Activated CD8-positive, alpha-beta memory T cell treated with anti-CD3 and anti-CD28 coated beads, Interleukin-2, amount 10 ng/mL, durations not matched to agents 7 days and 5 days (primary cell): ENCODE measurements at regions of chr16 and their contacts with region 1.

Region 1: GRCh38 chr16:75519881-75520280 is 16.0 kb downstream of the CHST5 start:
- DNase-seq: no peak
- ATAC-seq: no peak
- H3K4me3 Mint-ChIP-seq: no peak overlapping the region
- H3K27ac Mint-ChIP-seq: no peak overlapping the region
- H3K4me1 Mint-ChIP-seq: peaks cover 9% of the 10 kb centered on the region
- H3K27me3 Mint-ChIP-seq: peaks cover 4% of the 10 kb centered on the region

Region 2: DNA sequence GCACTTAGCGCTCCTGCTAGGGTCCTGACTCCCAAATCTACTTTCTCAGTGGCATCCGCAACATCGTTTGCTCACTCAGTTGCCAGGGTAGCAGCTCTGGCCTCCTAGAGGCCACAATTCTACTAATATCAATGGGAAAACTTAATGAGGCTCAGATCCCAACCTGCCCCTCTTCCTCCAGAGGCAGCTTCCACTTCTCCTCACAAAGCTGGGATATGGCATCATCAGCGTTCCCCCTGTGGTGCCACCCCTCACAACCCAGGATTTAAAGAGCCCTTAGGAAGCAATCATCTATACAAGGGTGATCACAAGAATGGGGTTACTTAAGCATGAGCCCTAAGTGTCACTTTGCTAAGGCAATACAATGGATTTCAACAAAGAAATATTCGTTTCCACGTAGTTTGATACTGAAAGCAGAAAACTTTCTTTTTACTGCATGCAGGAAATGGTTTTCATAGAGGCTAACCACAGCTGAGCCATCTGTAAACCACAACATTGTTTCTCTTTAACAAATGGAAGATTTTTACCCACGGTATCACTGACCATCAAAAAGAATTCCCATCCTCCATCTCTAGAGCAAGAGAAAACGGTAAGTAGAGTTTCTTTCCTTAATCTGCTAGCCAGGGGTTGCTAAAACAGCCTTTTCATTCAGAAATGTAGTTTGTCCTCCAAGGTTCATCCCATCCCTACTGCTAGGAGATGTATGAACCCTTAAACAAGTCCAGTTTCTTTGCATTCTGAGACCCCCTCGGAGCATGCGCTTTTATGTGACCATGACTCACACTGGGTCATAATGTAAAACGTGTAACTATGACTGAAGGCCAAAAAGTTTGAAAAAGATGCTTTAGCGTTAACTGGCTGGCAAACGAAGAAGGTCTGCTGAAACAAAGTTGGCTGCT is 200.1 kb before region 1 on chr16:
- CTCF ChIA-PET with region 1: no interaction called
- DNase-seq: peak; percentile 46
- ATAC-seq: peak; percentile 55
- H3K4me3 Mint-ChIP-seq: no peak overlapping the region
- H3K27ac Mint-ChIP-seq: peak overlapping the region; percentile 19
- H3K4me1 Mint-ChIP-seq: peaks cover 16% of the 10 kb centered on the region
- H3K27me3 Mint-ChIP-seq: peaks cover 51% of the 10 kb centered on the region

Region 3: DNA sequence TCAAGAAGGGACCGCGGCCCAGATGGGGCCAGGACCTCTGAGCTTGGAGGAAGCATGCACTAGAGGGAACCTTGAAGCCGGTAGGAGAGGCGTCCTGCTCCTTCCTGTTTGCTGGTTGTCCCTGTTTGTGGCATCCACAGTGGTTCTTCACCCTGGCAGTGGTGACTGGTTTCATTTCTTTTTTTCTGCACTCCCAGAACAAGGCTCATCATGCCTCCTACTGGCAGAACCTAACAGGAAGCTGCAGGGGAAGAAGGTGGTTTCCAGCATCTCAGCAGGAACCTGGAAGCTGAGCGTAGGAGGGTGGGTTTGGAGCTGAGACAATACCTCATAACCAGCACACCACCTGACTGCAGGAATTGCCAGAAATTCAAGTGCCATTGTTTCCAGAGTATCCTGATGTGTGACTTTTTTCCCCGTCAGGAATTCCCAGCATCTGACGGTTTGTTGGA is 30.4 kb after region 1 on chr16:
- CTCF ChIA-PET with region 1: interaction called, 24 read pairs
- DNase-seq: peak; percentile 56
- ATAC-seq: peak; percentile 73
- H3K4me3 Mint-ChIP-seq: no peak overlapping the region
- H3K27ac Mint-ChIP-seq: no peak overlapping the region
- H3K4me1 Mint-ChIP-seq: peaks cover 14% of the 10 kb centered on the region
- H3K27me3 Mint-ChIP-seq: peaks cover 2% of the 10 kb centered on the region

Region 4: GRCh38 chr16:75566040-75566810 is 46.3 kb after region 1 on chr16 and contains the start of gene GABARAPL2:
- CTCF ChIA-PET with region 1: interaction called, 19 read pairs
- DNase-seq: peak; percentile 92
- ATAC-seq: peak; percentile 80
- H3K4me3 Mint-ChIP-seq: peak within 1 kb of the TSS; percentile 89
- H3K27ac Mint-ChIP-seq: peak within 1 kb of the TSS; percentile 92
- H3K4me1 Mint-ChIP-seq: peaks cover 38% of the 10 kb centered on the region
- H3K27me3 Mint-ChIP-seq: peaks cover 15% of the 10 kb centered on the region
- total RNA-seq, gene GABARAPL2: 59.9 to 70.8 TPM

Region 5: GRCh38 chr16:75647492-75648264 is 127.8 kb after region 1 on chr16 and contains the starts of genes KARS1 and TERF2IP:
- CTCF ChIA-PET with region 1: interaction called, 23 read pairs
- DNase-seq: peak; percentile 97
- ATAC-seq: peak; percentile 90
- H3K4me3 Mint-ChIP-seq: peak within 1 kb of the TSS; percentile 81
- H3K27ac Mint-ChIP-seq: peak within 1 kb of the TSS; percentile 98
- H3K4me1 Mint-ChIP-seq: peaks cover 55% of the 10 kb centered on the region
- H3K27me3 Mint-ChIP-seq: no peaks in the 10 kb centered on the region
- total RNA-seq, gene KARS1: 182 to 220 TPM
- total RNA-seq, gene TERF2IP: 71.1 to 91.4 TPM